Activated CD4-positive, alpha-beta T cell treated with anti-CD3 and anti-CD28 coated beads, Interleukin-2, amount 10 ng/mL, durations not matched to agents 24 days and 14 days (primary cell): ENCODE measurements at regions of chr7 and their contacts with region 1.

Region 1: GRCh38 chr7:75994388-75995051 is at the start of gene TMEM120A:
- DNase-seq: peak; percentile 99
- H3K4me3 Mint-ChIP-seq: peak within 1 kb of the TSS; percentile 81
- H3K27ac Mint-ChIP-seq: peak within 1 kb of the TSS; percentile 41
- H3K4me1 Mint-ChIP-seq: peaks cover 36% of the 10 kb centered on the region
- H3K27me3 Mint-ChIP-seq: no peaks in the 10 kb centered on the region
- total RNA-seq, gene TMEM120A: 36.1 and 38.2 TPM in 2 replicates

Region 2: DNA sequence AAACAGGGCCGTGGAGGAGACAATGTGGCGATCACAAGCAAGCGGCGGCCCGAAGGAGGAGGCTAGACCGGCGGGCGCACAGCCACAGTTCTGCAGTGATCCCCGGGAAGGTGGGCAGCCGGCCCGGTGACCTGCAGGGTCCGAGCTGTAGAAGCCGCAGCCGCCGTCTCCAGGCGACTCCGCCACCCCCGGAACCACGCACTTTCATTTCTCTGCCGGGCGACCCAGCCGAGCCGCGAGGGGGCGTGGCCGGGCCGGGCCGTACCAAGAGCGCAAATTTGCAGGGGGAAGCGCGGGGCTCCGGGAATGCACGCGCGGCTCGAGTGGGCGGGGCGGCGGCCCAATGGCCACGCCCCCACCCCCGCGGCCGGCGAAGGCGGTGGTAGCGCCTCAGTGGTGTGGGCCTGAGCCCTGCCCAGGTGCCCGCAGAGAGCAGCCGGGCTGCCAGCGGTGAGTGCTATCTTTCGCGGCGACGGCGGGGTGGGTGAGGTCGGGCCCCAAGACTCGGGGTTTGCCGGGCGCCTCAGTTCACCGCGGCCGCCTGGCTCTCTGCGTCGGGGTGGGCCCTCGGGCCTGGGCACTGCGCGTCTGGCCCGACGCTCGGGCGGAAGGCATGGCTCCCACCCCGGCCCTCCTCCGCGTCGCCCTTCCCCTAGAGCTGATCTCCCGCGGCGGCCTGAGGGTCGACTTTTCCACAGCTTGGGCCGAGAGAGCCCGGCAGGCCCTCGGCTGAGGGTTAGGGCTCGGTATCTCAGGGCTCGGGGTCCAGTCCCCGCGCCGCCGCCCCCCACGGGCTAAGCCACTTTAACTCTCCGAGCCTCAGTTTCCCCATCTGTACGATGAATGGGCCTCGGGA is 79.6 kb before region 1 on chr7 and contains the start of gene POR:
- intact Hi-C with region 1: loop called (anchors 1 kb)
- DNase-seq: peak; percentile 100
- H3K4me3 Mint-ChIP-seq: peak within 1 kb of the TSS; percentile 91
- H3K27ac Mint-ChIP-seq: peak within 1 kb of the TSS; percentile 90
- H3K4me1 Mint-ChIP-seq: peaks cover 22% of the 10 kb centered on the region
- H3K27me3 Mint-ChIP-seq: no peaks in the 10 kb centered on the region
- total RNA-seq, gene POR: 69.4 and 75.0 TPM in 2 replicates

Region 3: GRCh38 chr7:76047811-76048667 is 53.5 kb after region 1 on chr7 and contains the starts of genes MDH2 and STYXL1:
- intact Hi-C with region 1: loop called (anchors 2 kb)
- DNase-seq: peak; percentile 98
- H3K4me3 Mint-ChIP-seq: peak within 1 kb of the TSS; percentile 97
- H3K27ac Mint-ChIP-seq: peak within 1 kb of the TSS; percentile 96
- H3K4me1 Mint-ChIP-seq: peaks cover 39% of the 10 kb centered on the region
- H3K27me3 Mint-ChIP-seq: no peaks in the 10 kb centered on the region
- total RNA-seq, gene MDH2: 291 and 293 TPM in 2 replicates
- total RNA-seq, gene STYXL1: 30.9 and 33.6 TPM in 2 replicates